Activated CD8-positive, alpha-beta T cell treated with anti-CD3 and anti-CD28 coated beads, Interleukin-2, amount 10 ng/mL, durations not matched to agents 7 days and 5 days (primary cell): ENCODE measurements at regions of chr22 and their contacts with region 1.

Region 1: DNA sequence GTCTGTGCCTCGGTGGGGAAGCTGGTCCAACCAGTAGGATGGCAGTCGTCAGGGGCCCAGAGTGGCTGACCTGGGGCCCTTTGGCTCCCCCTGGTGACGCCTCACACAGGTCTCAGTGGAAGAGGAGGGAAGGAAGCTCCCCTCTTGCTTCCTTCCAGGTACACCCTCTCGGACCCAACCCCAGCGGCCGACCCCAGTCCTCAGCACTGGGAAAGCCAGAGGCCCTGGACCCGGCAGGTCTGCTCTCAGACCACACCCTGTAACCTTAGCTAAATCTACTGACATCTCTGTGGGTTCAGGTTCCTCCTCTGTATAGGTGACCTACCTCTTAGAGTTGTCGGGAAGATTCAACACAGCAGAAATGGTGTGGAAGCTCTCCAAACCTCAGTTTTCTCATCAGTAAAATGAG is 3.4 kb upstream of the SCUBE1 start:
- DNase-seq: peak; percentile 77
- ATAC-seq: peak; percentile 78
- H3K4me3 Mint-ChIP-seq: no peak overlapping the region
- H3K27ac Mint-ChIP-seq: no peak overlapping the region
- H3K4me1 Mint-ChIP-seq: peaks cover 12% of the 10 kb centered on the region
- H3K27me3 Mint-ChIP-seq: peaks cover 35% of the 10 kb centered on the region

Region 2: GRCh38 chr22:43230971-43231723 is 115.4 kb before region 1 on chr22:
- CTCF ChIA-PET with region 1: interaction called, 115 read pairs
- POLR2A ChIA-PET with region 1: no interaction called
- DNase-seq: peak; percentile 76
- ATAC-seq: peak; percentile 66
- H3K4me3 Mint-ChIP-seq: no peak overlapping the region
- H3K27ac Mint-ChIP-seq: peak overlapping the region; percentile 20
- H3K4me1 Mint-ChIP-seq: peaks cover 9% of the 10 kb centered on the region
- H3K27me3 Mint-ChIP-seq: no peaks in the 10 kb centered on the region

Region 3: GRCh38 chr22:43263645-43264514 is 82.6 kb before region 1 on chr22:
- CTCF ChIA-PET with region 1: interaction called, 41 read pairs
- POLR2A ChIA-PET with region 1: no interaction called
- DNase-seq: peak; percentile 93
- ATAC-seq: peak; percentile 89
- H3K4me3 Mint-ChIP-seq: peak overlapping the region; percentile 72
- H3K27ac Mint-ChIP-seq: peak overlapping the region; percentile 93
- H3K4me1 Mint-ChIP-seq: peaks cover 34% of the 10 kb centered on the region
- H3K27me3 Mint-ChIP-seq: peaks cover 3% of the 10 kb centered on the region

Region 4: DNA sequence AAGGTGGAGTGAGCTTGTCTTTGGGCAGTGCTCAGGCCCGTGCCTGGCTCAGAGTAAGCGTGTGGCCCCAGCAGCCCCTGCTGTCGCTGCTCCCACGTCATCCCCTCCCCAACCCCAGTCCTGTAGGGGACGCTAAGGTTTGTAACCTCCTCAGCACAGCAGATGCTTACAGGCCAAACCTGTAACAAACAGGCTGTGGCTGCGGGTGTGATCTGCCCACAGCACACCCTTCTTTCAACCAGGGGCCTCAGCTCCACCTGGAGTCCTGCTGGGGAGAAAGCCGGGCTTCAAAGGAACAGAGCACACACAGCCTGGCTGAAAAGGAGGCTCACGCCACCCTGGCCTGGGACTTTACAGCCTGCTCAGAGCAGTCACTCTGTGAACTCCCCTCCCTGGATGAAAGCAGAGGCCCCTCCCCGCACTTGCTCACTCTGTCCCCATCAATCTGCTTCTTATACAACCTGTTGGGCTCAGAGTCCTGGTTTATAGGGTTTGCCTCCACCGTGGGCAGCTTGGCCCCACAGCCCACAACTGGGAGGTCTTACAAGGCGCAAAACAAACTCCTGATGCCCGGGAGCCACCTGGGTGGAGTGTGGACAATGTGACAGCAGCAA is 57.6 kb before region 1 on chr22:
- CTCF ChIA-PET with region 1: interaction called, 15 read pairs
- POLR2A ChIA-PET with region 1: no interaction called
- DNase-seq: no peak
- ATAC-seq: peak; percentile 38
- H3K4me3 Mint-ChIP-seq: no peak overlapping the region
- H3K27ac Mint-ChIP-seq: peak overlapping the region; percentile 63
- H3K4me1 Mint-ChIP-seq: peaks cover 14% of the 10 kb centered on the region
- H3K27me3 Mint-ChIP-seq: peaks cover 2% of the 10 kb centered on the region

Region 5: DNA sequence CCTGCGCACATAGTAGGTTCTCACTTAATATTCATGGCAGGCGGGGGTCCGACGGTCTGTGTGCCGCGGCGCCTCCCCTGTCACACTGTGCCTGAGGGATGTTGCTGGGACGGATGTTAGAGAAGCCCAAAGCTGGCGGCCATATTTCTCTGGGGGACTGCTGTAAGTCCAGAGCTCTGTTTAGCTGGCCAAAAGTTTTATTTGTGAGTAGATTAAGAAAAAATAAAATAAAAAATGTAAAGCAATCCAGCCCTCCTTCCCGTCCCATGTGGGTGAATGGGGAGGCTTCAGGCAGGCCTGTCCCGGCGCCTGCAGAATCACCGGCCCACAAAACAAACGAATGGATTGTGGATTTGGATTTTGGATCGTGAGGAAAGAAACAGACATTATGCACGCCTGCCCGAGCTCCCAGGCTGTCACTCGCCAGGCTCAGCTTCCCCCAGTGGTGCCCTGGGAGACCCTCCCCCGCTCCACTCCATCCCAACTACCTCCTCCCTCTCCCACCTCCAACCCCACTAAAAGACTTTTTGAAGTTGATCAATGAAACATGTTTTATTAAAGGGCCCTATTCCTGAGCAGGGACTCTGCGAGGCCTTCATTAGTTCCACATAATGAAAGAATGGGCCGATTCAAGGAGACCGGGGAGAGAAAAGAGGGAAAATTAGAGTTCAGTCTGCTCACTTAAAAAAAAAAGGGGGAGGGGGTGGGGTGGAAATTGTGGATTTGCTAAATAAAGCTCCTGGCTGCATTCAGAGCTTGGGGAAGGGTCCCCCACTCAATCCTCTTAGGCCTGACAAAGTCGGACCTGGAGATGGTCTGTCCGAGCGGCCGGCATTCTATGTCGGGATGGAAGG is 17.0 kb after region 1 on chr22:
- CTCF ChIA-PET with region 1: interaction called, 10 read pairs
- POLR2A ChIA-PET with region 1: no interaction called
- DNase-seq: no peak
- ATAC-seq: no peak
- H3K4me3 Mint-ChIP-seq: no peak overlapping the region
- H3K27ac Mint-ChIP-seq: no peak overlapping the region
- H3K4me1 Mint-ChIP-seq: no peaks in the 10 kb centered on the region
- H3K27me3 Mint-ChIP-seq: peaks cover 26% of the 10 kb centered on the region

Region 6: DNA sequence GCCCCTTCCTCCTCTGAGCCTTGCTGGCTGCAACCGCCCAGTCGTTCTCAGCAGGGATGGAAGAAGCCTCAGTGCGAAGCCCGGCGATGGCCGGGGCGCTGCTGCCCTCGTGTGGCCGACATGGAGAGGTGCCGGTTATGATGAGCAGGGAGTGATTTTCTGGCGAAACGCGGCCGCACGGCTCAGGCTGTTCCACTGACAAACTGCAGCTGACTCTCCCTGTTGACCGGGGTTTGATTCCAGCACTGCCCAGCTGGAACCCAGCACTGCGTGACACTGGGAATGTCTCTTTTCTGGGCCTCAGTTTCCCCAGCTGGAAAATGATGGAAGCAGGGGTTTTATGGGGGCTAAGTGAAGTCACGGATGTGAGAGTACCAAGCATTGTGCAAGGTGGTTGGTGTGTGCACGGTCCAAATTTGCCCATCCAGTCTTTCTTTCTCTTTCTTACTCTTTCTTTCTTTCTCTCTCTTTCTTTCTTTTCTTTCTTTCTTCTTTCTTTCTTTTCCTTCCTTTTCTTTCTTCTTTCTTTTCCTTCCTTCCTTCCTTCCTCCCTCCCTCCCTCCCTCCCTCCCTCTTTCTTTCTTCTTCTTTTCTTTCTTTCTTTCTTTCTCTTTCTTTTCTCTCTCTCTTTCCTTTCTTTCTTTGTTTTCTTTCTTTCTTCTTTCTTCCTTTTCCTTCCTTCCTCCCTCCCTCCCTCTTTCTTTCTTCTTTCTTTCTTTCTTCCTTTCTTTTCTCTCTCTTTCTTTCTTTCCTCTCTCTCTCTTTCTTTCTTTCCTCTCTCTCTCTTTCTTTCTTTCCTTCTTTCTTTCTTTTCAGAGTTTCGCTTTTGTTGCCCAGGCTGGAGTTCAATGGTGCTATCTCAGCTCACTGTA is 39.5 kb after region 1 on chr22:
- CTCF ChIA-PET with region 1: interaction called, 13 read pairs
- POLR2A ChIA-PET with region 1: no interaction called
- DNase-seq: peak; percentile 78
- ATAC-seq: peak; percentile 93
- H3K4me3 Mint-ChIP-seq: no peak overlapping the region
- H3K27ac Mint-ChIP-seq: no peak overlapping the region
- H3K4me1 Mint-ChIP-seq: peaks cover 10% of the 10 kb centered on the region
- H3K27me3 Mint-ChIP-seq: peaks cover 18% of the 10 kb centered on the region

Region 7: DNA sequence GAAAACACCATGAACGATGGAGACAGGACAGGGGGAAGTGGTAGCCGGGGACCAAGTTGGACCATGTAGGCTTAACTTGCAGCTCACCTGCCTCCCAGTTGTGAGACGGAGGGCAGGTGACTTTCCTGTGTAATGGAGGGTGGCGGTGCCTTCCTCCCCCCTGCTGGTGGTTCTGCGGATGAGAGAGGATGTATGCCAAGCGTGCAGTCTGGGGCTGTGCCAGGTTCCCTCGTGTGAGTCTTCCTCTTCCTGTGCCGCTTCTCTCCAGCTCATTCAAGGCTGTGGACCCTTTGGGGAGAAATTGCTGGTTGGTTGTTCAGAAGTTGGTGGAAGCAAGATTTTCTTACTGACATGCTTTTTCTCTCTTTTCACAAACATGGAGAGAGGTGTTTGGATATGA is 100.4 kb after region 1 on chr22:
- CTCF ChIA-PET with region 1: no interaction called
- POLR2A ChIA-PET with region 1: no interaction called
- DNase-seq: no peak
- ATAC-seq: no peak
- H3K4me3 Mint-ChIP-seq: no peak overlapping the region
- H3K27ac Mint-ChIP-seq: no peak overlapping the region
- H3K4me1 Mint-ChIP-seq: no peaks in the 10 kb centered on the region
- H3K27me3 Mint-ChIP-seq: peaks cover 3% of the 10 kb centered on the region